ENCODE measurements at regions of chr5 and their contacts with region 1.

Region 1: GRCh38 chr5:118611332-118611945 is 376.9 kb downstream of the DTWD2 start:
- DNase-seq: no peak
- ATAC-seq: peak; percentile 60
- H3K4me3 ChIP-seq: no peak overlapping the region
- H3K27ac ChIP-seq: no peak overlapping the region
- H3K4me1 ChIP-seq: no peaks in the 10 kb centered on the region
- H3K27me3 ChIP-seq: no peaks in the 10 kb centered on the region
- CTCF ChIP-seq: peak; percentile 54 to 58 (median 57)
- EP300 ChIP-seq: no peak
- POLR2A ChIP-seq: no peak
- RAD21 ChIP-seq: peak; percentile 74

Region 2: DNA sequence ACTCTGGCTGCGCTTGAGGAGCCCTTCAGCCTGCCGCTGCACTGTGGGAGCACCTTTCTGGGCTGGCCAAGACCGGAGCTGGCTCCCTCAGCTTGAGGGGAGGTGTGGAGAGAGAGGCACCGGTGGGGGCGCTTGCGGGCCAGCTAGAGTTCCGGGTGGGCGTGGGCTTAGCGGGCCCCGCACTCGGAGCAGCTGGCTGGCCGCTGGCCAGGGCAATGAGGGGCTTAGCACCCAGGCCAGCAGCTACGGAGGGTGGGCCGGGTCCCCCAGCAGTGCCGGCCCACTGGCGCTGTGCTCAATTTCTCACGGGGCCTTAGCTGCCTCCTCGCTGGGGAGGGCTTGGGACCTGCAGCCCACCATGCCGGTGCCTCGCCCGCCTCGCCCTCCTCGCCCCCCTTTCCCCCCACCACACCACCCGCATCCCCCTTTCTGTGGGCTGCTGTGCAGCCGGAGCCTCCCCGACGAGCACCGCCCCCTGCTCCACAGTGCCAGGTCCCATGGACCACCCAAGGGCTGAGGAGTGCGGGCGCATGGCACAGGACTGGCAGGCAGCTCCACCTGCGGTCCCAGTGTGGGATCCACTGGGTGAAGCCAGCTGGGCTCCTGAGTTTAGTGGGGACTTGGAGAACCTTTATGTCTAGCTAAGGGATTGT is 577.6 kb before region 1 on chr5:
- CTCF ChIA-PET with region 1: no interaction called
- POLR2A ChIA-PET with region 1: no interaction called
- RAD21 ChIA-PET with region 1: no interaction called
- SMC1A ChIA-PET with region 1: no interaction called
- in situ Hi-C with region 1: no loop called
- intact Hi-C with region 1: no loop called
- DNase-seq: no peak
- ATAC-seq: no peak
- H3K4me3 ChIP-seq: no peak overlapping the region
- H3K27ac ChIP-seq: no peak overlapping the region
- H3K4me1 ChIP-seq: no peaks in the 10 kb centered on the region
- H3K27me3 ChIP-seq: no peaks in the 10 kb centered on the region
- CTCF ChIP-seq: no peak
- EP300 ChIP-seq: no peak
- POLR2A ChIP-seq: no peak
- RAD21 ChIP-seq: no peak

Region 3: GRCh38 chr5:118956727-118957126 is 345.3 kb after region 1 on chr5:
- CTCF ChIA-PET with region 1: no interaction called
- POLR2A ChIA-PET with region 1: no interaction called
- RAD21 ChIA-PET with region 1: no interaction called
- SMC1A ChIA-PET with region 1: no interaction called
- in situ Hi-C with region 1: no loop called
- intact Hi-C with region 1: loop called (anchors 10 kb)
- DNase-seq: no peak
- ATAC-seq: no peak
- H3K4me3 ChIP-seq: no peak overlapping the region
- H3K27ac ChIP-seq: no peak overlapping the region
- H3K4me1 ChIP-seq: no peaks in the 10 kb centered on the region
- H3K27me3 ChIP-seq: no peaks in the 10 kb centered on the region
- CTCF ChIP-seq: peak in 2 of 3 experiments; percentile 31 to 46; a peak in 2 of 6 replicates
- EP300 ChIP-seq: no peak
- POLR2A ChIP-seq: no peak
- RAD21 ChIP-seq: peak; percentile 56